ENCODE measurements at regions of chr9 and their contacts with region 1.

Region 1: GRCh38 chr9:124852829-124853531 is at the start of gene WDR38:
- DNase-seq: peak; percentile 78
- ATAC-seq: peak; percentile 85
- H3K4me3 ChIP-seq: peak within 1 kb of the TSS; percentile 32 to 51
- H3K27ac ChIP-seq: peak within 1 kb of the TSS; percentile 37; the same call in 1 of the 2 replicates
- H3K4me1 ChIP-seq: peaks cover 5 to 30% of the 10 kb centered on the region in 2 experiments; a peak in 3 of 4 replicates
- H3K27me3 ChIP-seq: no peaks in the 10 kb centered on the region
- CTCF ChIP-seq: peak in 2 of 3 experiments; percentile 86 to 99; a peak in 4 of 6 replicates
- POLR2A ChIP-seq: no peak
- RAD21 ChIP-seq: no peak
- total RNA-seq, gene WDR38: not detected

Region 2: GRCh38 chr9:124110307-124110915 is 742.6 kb before region 1 on chr9:
- CTCF ChIA-PET with region 1: no interaction called
- POLR2A ChIA-PET with region 1: no interaction called
- RAD21 ChIA-PET with region 1: no interaction called
- intact Hi-C with region 1: no loop called
- DNase-seq: no peak
- ATAC-seq: peak; percentile 76
- H3K4me3 ChIP-seq: no peak overlapping the region
- H3K27ac ChIP-seq: no peak overlapping the region
- H3K4me1 ChIP-seq: no peaks in the 10 kb centered on the region
- H3K27me3 ChIP-seq: peaks cover 9% of the 10 kb centered on the region; the same call in 1 of the 2 replicates
- CTCF ChIP-seq: no peak
- POLR2A ChIP-seq: no peak
- RAD21 ChIP-seq: no peak

Region 3: GRCh38 chr9:124708633-124709291 is 144.2 kb before region 1 on chr9:
- CTCF ChIA-PET with region 1: interaction called, 4 read pairs
- POLR2A ChIA-PET with region 1: no interaction called
- RAD21 ChIA-PET with region 1: interaction called in 1 of 2 experiments, 3 read pairs
- intact Hi-C with region 1: loop called (anchors 1 kb)
- DNase-seq: no peak
- ATAC-seq: no peak
- H3K4me3 ChIP-seq: no peak overlapping the region
- H3K27ac ChIP-seq: no peak overlapping the region
- H3K4me1 ChIP-seq: peaks cover 3 to 13% of the 10 kb centered on the region in 2 experiments
- H3K27me3 ChIP-seq: no peaks in the 10 kb centered on the region
- CTCF ChIP-seq: no peak
- POLR2A ChIP-seq: no peak
- RAD21 ChIP-seq: no peak

Region 4: GRCh38 chr9:124771021-124771866 is 81.7 kb before region 1 on chr9 and contains the start of gene NR6A1:
- CTCF ChIA-PET with region 1: interaction called, 601 read pairs
- POLR2A ChIA-PET with region 1: interaction called, 30 read pairs
- RAD21 ChIA-PET with region 1: interaction called, 47 to 49 read pairs
- intact Hi-C with region 1: loop called (anchors 1 kb)
- DNase-seq: peak; percentile 95
- ATAC-seq: peak; percentile 81
- H3K4me3 ChIP-seq: peak within 1 kb of the TSS; percentile 71 to 73
- H3K27ac ChIP-seq: peak within 1 kb of the TSS; percentile 90
- H3K4me1 ChIP-seq: peaks cover 22 to 44% of the 10 kb centered on the region in 2 experiments
- H3K27me3 ChIP-seq: no peaks in the 10 kb centered on the region
- CTCF ChIP-seq: 0 out of 6 replicates have a peak, but pooled peaks of 1 of the 3 experiments have one; percentile 8
- POLR2A ChIP-seq: peak; percentile 47
- RAD21 ChIP-seq: no peak
- total RNA-seq, gene NR6A1: 9.9 TPM

Region 5: GRCh38 chr9:124794902-124795491 is 58.0 kb before region 1 on chr9:
- CTCF ChIA-PET with region 1: interaction called, 30 read pairs
- POLR2A ChIA-PET with region 1: interaction called, 3 read pairs
- RAD21 ChIA-PET with region 1: interaction called, 6 to 13 read pairs
- intact Hi-C with region 1: loop called (anchors 1 kb)
- DNase-seq: peak; percentile 51
- ATAC-seq: peak; percentile 97
- H3K4me3 ChIP-seq: no peak overlapping the region
- H3K27ac ChIP-seq: no peak overlapping the region
- H3K4me1 ChIP-seq: peaks cover 12 to 46% of the 10 kb centered on the region in 2 experiments
- H3K27me3 ChIP-seq: no peaks in the 10 kb centered on the region
- CTCF ChIP-seq: peak; percentile 57 to 96 (median 62)
- POLR2A ChIP-seq: no peak
- RAD21 ChIP-seq: peak; percentile 92

Region 6: DNA sequence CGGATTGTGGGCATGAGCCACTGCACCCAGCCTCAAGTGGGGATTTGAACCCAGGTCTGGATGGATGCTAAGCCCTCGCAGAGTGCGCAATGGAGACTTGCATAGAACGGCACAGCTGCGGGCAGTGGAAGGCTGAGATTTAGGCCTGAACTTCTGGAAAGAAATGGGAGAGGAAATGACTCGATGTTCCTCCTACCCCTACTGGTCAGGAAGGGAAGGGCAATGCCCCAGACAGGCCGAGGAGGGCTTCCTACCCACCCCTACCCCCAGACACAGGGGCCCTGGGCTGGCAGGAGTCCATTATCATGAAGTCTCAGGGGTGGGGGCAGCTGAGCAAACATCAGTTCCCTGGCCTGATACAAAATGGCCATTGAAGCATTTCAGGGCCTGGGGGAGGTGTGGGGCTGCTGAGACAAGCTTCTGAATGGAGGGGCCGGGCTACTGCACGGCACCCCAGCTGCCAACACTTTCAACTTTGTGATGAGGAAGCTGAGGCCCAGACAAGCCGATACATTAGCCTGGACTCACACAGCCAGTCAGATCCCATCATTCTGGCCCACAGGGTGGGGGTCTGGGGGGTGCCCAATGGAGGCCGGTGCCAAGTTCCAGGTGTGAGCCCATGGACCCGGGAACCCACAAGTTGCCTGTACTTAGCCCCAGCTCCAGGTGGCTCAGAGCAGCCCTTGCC is 13.2 kb before region 1 on chr9:
- CTCF ChIA-PET with region 1: interaction called, 87 read pairs
- POLR2A ChIA-PET with region 1: interaction called, 7 read pairs
- RAD21 ChIA-PET with region 1: interaction called, 4 to 9 read pairs
- intact Hi-C with region 1: no loop called
- DNase-seq: peak; percentile 33
- ATAC-seq: peak; percentile 65
- H3K4me3 ChIP-seq: no peak overlapping the region
- H3K27ac ChIP-seq: no peak overlapping the region
- H3K4me1 ChIP-seq: peaks cover 26 to 48% of the 10 kb centered on the region in 2 experiments
- H3K27me3 ChIP-seq: no peaks in the 10 kb centered on the region
- CTCF ChIP-seq: peak in 2 of 3 experiments; percentile 66 to 81; a peak in 4 of 6 replicates
- POLR2A ChIP-seq: no peak
- RAD21 ChIP-seq: no peak

Measured in HCT116 (cell line).